ENCODE measurements at regions of chr20 and their contacts with region 1.

Region 1: GRCh38 chr20:47334022-47334551 is 22.4 kb downstream of the ZMYND8 start:
- DNase-seq: peak; percentile 56 to 66
- ATAC-seq: peak; percentile 74 to 87
- H3K4me3 ChIP-seq: peak overlapping the region; percentile 27 to 39 (median 35)
- H3K27ac ChIP-seq: peak overlapping the region; percentile 78 to 91 (median 83)
- H3K4me1 ChIP-seq: peaks cover 68 to 88% of the 10 kb centered on the region in 2 donors
- H3K27me3 ChIP-seq: no peaks in the 10 kb centered on the region
- CTCF ChIP-seq: no peak
- POLR2A ChIP-seq: peak in 1 of 2 donors; percentile 31

Region 2: GRCh38 chr20:47356526-47357295 is 22.6 kb after region 1 on chr20 and contains the start of gene ZMYND8:
- in situ Hi-C with region 1: no loop called
- intact Hi-C with region 1: loop called (anchors 2 kb)
- DNase-seq: peak; percentile 86 to 96
- ATAC-seq: peak; percentile 41 to 46
- H3K4me3 ChIP-seq: peak within 1 kb of the TSS; percentile 28 to 52 (median 44)
- H3K27ac ChIP-seq: peak within 1 kb of the TSS; percentile 96 to 100 (median 97)
- H3K4me1 ChIP-seq: peaks cover 97 to 99% of the 10 kb centered on the region in 2 donors
- H3K27me3 ChIP-seq: no peaks in the 10 kb centered on the region
- CTCF ChIP-seq: no peak
- POLR2A ChIP-seq: peak; percentile 14 to 57
- total RNA-seq, gene ZMYND8: 15.1 to 32.2 (median 19.7) TPM